OCI-LY7 (cell line): ENCODE measurements at regions of chr9 and their contacts with region 1.

Region 1: DNA sequence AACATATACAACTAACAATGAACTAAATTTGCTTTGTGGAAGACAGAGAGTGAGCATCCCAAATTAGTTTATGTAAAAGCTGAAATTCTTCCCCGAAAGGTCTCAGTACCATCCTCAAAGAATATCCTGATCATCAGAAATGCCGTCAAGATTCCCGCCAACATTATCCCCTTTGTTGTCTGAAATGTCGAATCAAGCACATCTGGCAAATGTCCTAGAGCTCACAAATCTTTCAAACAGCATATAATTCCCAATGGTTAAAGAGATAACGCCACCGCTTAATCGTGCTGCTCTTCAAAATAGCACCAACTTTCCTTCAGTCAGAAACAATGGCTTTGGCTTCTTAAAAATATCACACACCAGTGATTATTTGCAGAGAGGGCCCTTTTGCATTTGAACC is 23.8 kb downstream of the MORN5 start:
- DNase-seq: no peak
- H3K4me3 ChIP-seq: no peak overlapping the region
- H3K27ac ChIP-seq: no peak overlapping the region
- H3K4me1 ChIP-seq: no peaks in the 10 kb centered on the region
- CTCF ChIP-seq: no peak

Region 2: DNA sequence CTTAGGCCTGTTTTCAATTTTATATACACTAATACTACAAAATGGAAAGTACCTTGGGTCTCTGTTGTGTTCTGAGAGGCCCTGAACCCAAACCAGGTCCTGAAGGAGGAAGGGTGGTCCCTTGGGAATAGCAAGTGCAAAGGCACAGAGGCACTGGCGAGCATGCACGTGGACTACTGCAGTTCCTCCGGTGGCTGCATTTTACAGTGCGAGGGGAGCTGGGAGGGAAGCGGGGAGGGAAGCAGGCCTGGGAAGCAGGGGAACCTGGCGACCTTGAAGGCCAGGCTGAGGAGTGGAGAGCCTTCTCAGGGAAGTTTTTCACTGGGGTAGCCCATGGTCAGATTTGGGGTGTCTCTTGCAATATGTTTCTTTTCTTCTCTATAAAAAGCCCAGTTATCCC is 10.2 kb after region 1 on chr9:
- CTCF ChIA-PET with region 1: no interaction called
- POLR2A ChIA-PET with region 1: no interaction called
- intact Hi-C with region 1: loop called (anchors 1 kb)
- DNase-seq: no peak
- H3K4me3 ChIP-seq: no peak overlapping the region
- H3K27ac ChIP-seq: no peak overlapping the region
- H3K4me1 ChIP-seq: no peaks in the 10 kb centered on the region
- CTCF ChIP-seq: no peak